GM13977 (cell line): ENCODE measurements at regions of chr21 and their contacts with region 1.

Region 1: DNA sequence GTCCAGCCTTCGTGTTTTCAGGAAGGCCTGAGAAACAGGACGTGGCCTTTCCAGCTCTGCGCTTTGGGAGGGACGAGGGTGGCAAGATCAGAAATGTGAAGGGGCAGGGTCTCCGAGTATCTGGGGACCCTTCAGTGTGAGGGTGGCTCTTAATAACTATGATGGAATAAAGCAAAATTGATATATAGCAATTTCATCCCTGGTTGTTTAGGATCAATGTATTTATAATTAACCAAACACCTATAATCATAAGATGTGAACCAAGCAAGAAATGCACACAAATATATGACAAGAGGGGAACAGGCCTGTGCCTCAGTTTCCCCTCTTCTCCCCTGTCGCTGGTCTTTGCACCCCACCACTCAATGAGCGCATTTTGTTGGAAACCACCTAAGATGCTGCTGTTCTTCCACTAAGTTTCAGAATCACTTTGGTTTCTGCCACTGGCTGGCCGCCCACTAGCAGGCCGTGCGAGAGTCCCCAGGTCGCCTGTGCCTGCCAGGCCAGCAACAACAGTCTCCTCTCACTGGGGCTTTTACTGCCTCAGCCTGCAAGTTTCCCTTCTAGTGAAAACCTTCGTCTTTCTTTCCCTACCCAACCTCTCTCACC is 36.6 kb downstream of the UBASH3A start:
- DNase-seq: peak; percentile 84
- CTCF ChIP-seq: no peak

Region 2: DNA sequence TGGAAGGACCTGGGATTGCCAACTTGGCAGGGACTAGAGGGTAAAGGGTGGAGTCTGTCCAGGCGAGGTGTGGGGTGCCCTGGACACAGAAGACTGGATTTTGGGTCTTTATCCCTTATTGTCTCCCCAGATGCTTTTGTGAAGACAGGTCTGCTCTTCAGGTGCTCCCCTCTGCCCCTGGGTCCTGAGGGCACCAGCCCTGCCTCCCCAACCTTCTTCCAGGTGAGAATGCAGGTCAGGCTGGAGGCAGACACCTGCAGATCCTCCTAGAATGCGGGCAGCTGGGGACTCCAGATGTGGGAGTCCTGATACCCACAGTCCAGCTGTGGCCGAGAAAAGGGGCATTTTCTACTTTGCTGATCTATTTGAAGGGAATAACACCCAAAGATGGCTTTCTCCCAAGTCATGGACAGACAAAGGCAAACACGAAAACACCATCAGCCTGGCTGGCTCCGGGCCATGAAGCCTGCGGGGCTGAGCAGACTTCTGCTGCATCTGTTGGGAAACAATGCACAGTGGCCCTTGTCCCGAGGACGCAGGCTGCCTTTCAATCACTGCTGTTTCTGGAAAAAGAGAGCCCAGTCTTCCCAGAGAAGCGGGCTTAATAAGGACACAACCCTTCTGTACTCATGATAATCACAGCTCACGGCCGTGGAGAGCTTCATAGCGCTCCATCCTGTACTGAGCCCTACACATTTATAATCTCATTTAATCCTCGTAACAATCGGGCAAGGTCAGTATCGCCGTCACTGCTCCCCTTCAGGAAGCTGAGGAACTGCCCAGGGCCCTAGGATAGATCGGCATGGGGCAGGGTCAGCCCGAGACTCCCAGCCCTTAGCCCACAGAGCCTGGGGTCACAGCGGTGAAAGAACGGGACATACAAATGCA is 283.4 kb before region 1 on chr21:
- in situ Hi-C with region 1: loop called (anchors 10 kb)
- DNase-seq: peak; percentile 9
- CTCF ChIP-seq: no peak

Region 3: GRCh38 chr21:42209819-42210479 is 230.3 kb before region 1 on chr21:
- in situ Hi-C with region 1: no loop called
- DNase-seq: no peak
- CTCF ChIP-seq: no peak

Region 4: DNA sequence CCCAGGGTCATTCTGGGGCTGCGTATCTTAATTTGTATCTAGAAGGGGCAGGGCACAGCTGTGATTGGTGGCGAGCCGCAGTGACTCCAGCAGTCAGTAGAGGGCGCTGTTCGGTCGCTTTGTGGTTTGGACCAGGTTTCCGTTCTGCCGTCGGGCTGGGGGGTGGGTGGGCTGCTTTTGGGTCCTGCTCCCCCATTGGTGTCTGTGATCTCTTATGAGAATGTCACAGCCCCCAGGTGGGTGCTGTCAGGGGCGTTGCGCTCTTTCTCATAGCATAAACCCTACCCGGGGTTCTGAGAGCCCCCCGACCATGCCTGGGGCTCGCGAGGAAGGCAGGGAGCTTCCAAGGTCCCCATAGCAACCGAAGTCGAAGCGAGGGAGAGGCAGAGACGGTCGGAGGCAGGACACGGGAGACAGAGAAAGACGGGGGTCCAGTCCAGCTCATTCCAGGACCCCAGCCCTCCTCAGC is 130.5 kb before region 1 on chr21:
- in situ Hi-C with region 1: loop called (anchors 10 kb)
- DNase-seq: peak; percentile 88
- CTCF ChIP-seq: peak; percentile 91

Region 5: DNA sequence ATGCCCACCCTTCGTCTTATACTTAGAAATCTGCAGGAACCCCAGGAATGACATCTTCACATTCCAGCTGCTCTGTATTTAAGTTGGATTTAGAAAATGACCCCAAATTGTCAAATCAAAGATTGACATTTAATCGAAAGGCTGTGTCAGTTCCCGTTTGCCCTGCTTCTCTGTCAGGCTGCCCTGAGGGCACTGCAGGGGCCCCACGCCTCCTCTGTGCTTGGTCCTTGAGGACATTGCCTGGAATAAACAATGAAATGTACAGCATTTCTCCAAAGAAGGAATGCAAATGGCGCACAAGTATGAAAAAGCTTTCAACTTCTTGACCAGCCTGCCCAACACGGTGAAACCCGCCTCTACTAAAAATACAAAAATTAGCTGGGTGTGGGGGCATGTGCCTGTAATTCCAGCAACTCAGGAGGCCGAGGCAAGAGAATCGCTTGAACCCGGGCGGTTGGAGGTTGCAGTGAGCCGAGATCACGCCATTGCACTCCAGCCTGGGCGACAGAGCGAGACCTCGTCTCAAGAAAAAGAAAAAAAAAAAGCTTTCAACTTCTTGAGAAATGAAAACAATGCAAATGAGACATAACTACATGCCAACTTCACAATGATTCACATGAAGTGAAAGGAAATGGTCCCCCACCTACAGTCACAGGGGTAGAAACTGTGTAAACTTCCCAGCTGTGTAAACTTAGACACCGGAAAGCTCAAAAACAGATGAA is 47.4 kb before region 1 on chr21:
- in situ Hi-C with region 1: loop called (anchors 10 kb)
- DNase-seq: peak; percentile 74
- CTCF ChIP-seq: no peak

Region 6: GRCh38 chr21:42505090-42505726 is 64.9 kb after region 1 on chr21:
- in situ Hi-C with region 1: no loop called
- DNase-seq: peak; percentile 77
- CTCF ChIP-seq: no peak

Region 7: DNA sequence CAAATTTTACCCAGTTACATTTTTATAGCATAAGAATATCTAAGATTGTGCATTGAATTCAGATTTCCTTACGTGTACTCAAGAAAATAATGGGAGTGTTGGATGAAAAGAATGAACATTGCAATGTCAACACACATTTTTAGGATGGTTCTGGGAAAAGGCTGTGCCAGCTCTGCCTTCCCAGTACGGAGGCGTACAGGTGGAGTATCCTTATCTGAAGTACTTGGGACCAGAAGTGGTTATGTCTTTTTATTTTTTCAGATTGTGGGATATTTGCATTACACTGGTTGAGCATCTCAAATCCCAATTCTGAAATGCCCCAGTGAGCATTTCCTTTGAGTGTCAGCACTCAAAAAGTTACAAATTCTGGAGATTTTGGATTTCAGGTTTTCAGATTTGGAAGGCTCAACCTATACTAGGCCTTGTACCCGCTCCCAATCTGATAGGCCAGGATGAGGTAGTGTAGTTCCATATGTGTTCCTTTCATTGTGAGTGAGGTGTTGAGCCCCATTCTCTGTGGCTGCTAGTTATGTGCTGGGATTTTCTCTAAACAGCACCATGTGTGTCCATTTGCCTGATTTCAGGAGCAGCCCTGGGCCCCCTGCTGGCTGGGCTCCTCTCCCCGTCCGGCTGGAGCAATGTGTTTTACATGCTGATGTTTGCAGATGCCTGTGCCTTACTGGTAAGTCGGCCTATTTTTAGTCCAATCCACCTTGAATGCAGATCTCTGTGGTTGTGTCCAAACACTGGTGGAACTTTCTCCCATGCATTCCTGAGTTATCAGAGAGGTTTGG is 134.1 kb after region 1 on chr21:
- in situ Hi-C with region 1: no loop called
- DNase-seq: no peak
- CTCF ChIP-seq: no peak

Region 8: GRCh38 chr21:42607102-42607789 is 167.0 kb after region 1 on chr21:
- in situ Hi-C with region 1: no loop called
- DNase-seq: no peak
- CTCF ChIP-seq: no peak